H1 (cell line): ENCODE measurements at regions of chr20 and their contacts with region 1.

Region 1: GRCh38 chr20:59207742-59208357 is 44.2 kb downstream of the ZNF831 start:
- DNase-seq: peak; percentile 54 to 80
- H3K4me3 ChIP-seq: no peak overlapping the region
- H3K27ac ChIP-seq: no peak overlapping the region
- H3K4me1 ChIP-seq: peaks cover 2 to 9% (median 4%) of the 10 kb centered on the region in 4 experiments; a peak in 5 of 7 replicates
- H3K27me3 ChIP-seq: peaks cover 0 to 10% (median 1%) of the 10 kb centered on the region in 4 experiments; a peak in 2 of 7 replicates
- CTCF ChIP-seq: peak; percentile 85 to 92 (median 88)
- EP300 ChIP-seq: no peak
- POLR2A ChIP-seq: no peak
- RAD21 ChIP-seq: peak; percentile 94 to 96

Region 2: DNA sequence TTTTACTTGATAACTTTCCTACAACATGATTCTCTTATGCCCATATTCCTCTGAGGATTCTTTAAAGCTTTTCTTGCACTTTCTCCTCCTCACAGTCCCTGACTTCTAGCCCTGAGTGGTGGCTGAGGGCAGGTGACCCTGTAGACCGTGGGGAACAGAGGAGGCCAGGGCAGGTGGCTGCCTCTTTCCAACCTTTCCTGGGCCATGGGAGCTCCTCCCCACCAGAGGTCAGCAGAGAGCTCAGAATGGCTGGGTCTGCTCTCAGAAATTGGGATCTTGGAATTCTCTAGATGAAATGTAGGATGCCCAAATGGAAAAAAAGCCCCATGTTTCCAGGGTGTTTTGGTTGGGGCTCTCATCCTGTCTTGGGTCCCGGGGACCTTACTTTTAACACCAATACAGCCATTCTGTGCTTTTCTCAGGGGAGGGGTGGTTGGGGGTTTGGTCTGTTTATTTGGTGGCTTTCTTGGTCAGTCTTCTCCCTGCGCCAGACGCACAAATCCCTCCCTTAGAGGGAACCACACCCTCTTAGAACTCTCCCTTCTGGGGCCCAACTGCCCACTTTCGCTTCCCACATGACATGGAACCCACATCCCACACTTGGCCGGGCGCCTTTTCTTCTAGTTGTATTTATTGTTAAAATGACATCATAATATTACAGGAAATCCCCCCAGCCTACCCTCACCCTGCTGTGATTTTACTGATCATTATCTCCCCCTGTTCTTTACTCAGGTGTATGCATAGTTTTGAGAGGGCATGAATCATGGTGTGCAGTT is 337.4 kb before region 1 on chr20:
- CTCF ChIA-PET with region 1: interaction called, 12 read pairs
- POLR2A ChIA-PET with region 1: no interaction called
- DNase-seq: peak in 1 of 2 experiments; percentile 87
- H3K4me3 ChIP-seq: no peak overlapping the region
- H3K27ac ChIP-seq: no peak overlapping the region
- H3K4me1 ChIP-seq: peaks cover 0 to 3% (median 0%) of the 10 kb centered on the region in 4 experiments; a peak in 2 of 7 replicates
- H3K27me3 ChIP-seq: no peaks in the 10 kb centered on the region
- CTCF ChIP-seq: peak; percentile 86 to 90 (median 87)
- EP300 ChIP-seq: no peak
- POLR2A ChIP-seq: no peak
- RAD21 ChIP-seq: peak; percentile 85 to 86

Region 3: GRCh38 chr20:59110607-59111006 is 97.2 kb before region 1 on chr20:
- CTCF ChIA-PET with region 1: interaction called, 11 read pairs
- POLR2A ChIA-PET with region 1: no interaction called
- DNase-seq: no peak
- H3K4me3 ChIP-seq: no peak overlapping the region
- H3K27ac ChIP-seq: no peak overlapping the region
- H3K4me1 ChIP-seq: no peaks in the 10 kb centered on the region
- H3K27me3 ChIP-seq: no peaks in the 10 kb centered on the region; a peak in 1 of 7 replicates
- CTCF ChIP-seq: no peak
- EP300 ChIP-seq: no peak
- POLR2A ChIP-seq: no peak
- RAD21 ChIP-seq: no peak

Region 4: GRCh38 chr20:59191756-59192532 is 15.9 kb before region 1 on chr20:
- CTCF ChIA-PET with region 1: interaction called, 21 read pairs
- POLR2A ChIA-PET with region 1: no interaction called
- DNase-seq: no peak
- H3K4me3 ChIP-seq: no peak overlapping the region
- H3K27ac ChIP-seq: no peak overlapping the region
- H3K4me1 ChIP-seq: no peaks in the 10 kb centered on the region
- H3K27me3 ChIP-seq: no peaks in the 10 kb centered on the region
- CTCF ChIP-seq: no peak
- EP300 ChIP-seq: no peak
- POLR2A ChIP-seq: no peak
- RAD21 ChIP-seq: no peak

Region 5: DNA sequence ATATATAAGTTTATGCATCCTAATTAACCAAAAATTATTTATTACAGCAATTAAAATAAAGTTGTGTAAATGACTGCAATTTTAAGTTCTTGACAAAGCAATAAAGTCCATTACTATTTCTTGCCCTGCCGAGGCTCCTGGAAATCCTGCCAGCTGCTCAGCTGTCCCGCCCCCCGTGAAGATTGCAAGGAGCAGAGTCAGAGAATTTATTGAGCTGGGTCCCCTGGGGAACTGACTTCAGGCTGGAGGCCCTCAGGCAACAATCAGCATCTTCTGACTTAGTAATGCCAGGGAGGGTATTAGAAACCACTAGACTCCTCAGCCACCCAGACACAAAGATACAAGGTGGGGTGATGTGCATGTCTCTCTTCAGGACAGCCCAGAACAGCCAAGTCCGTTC is 184.9 kb after region 1 on chr20:
- CTCF ChIA-PET with region 1: interaction called, 10 read pairs
- POLR2A ChIA-PET with region 1: no interaction called
- DNase-seq: no peak
- H3K4me3 ChIP-seq: no peak overlapping the region
- H3K27ac ChIP-seq: no peak overlapping the region
- H3K4me1 ChIP-seq: no peaks in the 10 kb centered on the region
- H3K27me3 ChIP-seq: no peaks in the 10 kb centered on the region
- CTCF ChIP-seq: no peak
- EP300 ChIP-seq: no peak
- POLR2A ChIP-seq: no peak
- RAD21 ChIP-seq: no peak

Region 6: DNA sequence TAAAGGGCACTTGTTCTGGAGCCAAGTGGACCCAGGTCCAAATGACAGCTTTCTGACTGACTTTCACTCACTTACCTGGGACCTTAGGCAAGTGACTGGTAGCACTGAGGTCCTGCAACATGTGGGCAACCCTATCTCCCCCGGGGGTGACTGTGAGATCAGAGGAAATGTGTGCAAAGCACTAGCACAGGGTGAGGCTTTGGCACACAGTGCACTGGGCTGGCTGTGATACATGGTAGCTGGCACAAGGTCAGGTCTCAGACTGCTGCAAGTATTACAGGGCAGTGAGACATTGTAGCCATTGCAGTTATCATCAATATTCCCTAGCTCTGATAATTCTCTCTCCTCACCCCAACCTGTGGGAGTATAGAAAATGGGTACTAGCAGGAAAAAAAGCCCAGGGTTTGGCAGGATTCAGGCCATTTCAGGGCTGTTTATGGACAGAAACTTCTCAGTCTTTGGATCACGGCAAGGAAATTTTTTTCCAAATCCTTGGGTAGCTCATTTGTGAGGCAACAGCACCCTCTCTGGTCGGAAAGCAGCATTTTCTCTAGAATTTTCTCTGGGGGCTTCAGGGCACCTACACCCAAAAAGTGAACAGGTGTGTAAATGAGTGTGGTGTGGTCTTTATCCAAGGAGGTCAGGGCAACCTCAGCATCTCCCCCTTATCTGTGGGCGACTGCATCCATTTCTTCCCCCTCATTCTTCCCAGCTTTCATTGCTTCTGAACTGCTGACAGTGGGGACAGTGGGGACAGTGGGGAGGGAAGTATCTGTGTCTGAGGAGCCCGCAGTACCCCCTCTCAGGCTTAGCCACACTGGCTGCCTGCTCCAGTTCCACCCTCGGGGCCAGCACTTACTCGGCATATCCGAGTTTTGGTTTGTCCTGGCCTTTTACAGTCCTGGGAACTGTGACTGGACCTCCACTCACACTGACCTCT is 247.8 kb after region 1 on chr20:
- CTCF ChIA-PET with region 1: interaction called, 11 read pairs
- POLR2A ChIA-PET with region 1: no interaction called
- DNase-seq: peak in 1 of 2 experiments; percentile 50
- H3K4me3 ChIP-seq: no peak overlapping the region
- H3K27ac ChIP-seq: no peak overlapping the region
- H3K4me1 ChIP-seq: no peaks in the 10 kb centered on the region; a peak in 3 of 7 replicates
- H3K27me3 ChIP-seq: no peaks in the 10 kb centered on the region
- CTCF ChIP-seq: peak in 2 of 3 experiments; percentile 69 to 73; a peak in 3 of 4 replicates
- EP300 ChIP-seq: no peak
- POLR2A ChIP-seq: no peak
- RAD21 ChIP-seq: peak; percentile 87 to 91

Region 7: GRCh38 chr20:59469267-59470252 is 261.7 kb after region 1 on chr20:
- CTCF ChIA-PET with region 1: no interaction called
- POLR2A ChIA-PET with region 1: no interaction called
- DNase-seq: peak; percentile 44 to 70
- H3K4me3 ChIP-seq: 0 out of 8 replicates have a peak overlapping the region, but pooled peaks of 1 of the 4 experiments have one; percentile 13
- H3K27ac ChIP-seq: no peak overlapping the region; the same call in 1 of the 2 replicates
- H3K4me1 ChIP-seq: peaks cover 0 to 9% (median 7%) of the 10 kb centered on the region in 4 experiments; a peak in 6 of 7 replicates
- H3K27me3 ChIP-seq: no peaks in the 10 kb centered on the region; a peak in 1 of 7 replicates
- CTCF ChIP-seq: peak; percentile 29 to 53 (median 50); a peak in 3 of 4 replicates
- EP300 ChIP-seq: no peak
- POLR2A ChIP-seq: no peak
- RAD21 ChIP-seq: peak in 1 of 2 experiments; percentile 22; a peak in 1 of 4 replicates